ENCODE measurements at regions of chr15 and their contacts with region 1.

Region 1: GRCh38 chr15:70853821-70854666 is at the start of gene LARP6:
- DNase-seq: no peak
- ATAC-seq: peak; percentile 81
- H3K4me3 ChIP-seq: peak within 1 kb of the TSS; percentile 60 to 78 (median 64)
- H3K27ac ChIP-seq: no peak within 1 kb of the TSS
- H3K4me1 ChIP-seq: peaks cover 19% of the 10 kb centered on the region
- H3K27me3 ChIP-seq: peaks cover 0 to 17% of the 10 kb centered on the region in 2 experiments; a peak in 3 of 5 replicates
- CTCF ChIP-seq: no peak
- EP300 ChIP-seq: no peak
- POLR2A ChIP-seq: no peak
- RAD21 ChIP-seq: no peak
- total RNA-seq, gene LARP6: 2.9 and 3.0 TPM in 2 replicates

Region 2: GRCh38 chr15:70703096-70703878 is 150.8 kb before region 1 on chr15:
- CTCF ChIA-PET with region 1: no interaction called
- POLR2A ChIA-PET with region 1: no interaction called
- in situ Hi-C with region 1: no loop called
- intact Hi-C with region 1: no loop called
- DNase-seq: no peak
- ATAC-seq: no peak
- H3K4me3 ChIP-seq: no peak overlapping the region
- H3K27ac ChIP-seq: no peak overlapping the region
- H3K4me1 ChIP-seq: peaks cover 16% of the 10 kb centered on the region
- H3K27me3 ChIP-seq: no peaks in the 10 kb centered on the region
- CTCF ChIP-seq: no peak
- EP300 ChIP-seq: no peak
- POLR2A ChIP-seq: no peak
- RAD21 ChIP-seq: no peak

Region 3: GRCh38 chr15:70833897-70834765 is 19.9 kb before region 1 on chr15:
- CTCF ChIA-PET with region 1: no interaction called
- POLR2A ChIA-PET with region 1: interaction called, 69 read pairs
- in situ Hi-C with region 1: no loop called
- intact Hi-C with region 1: no loop called
- DNase-seq: peak; percentile 72
- ATAC-seq: peak; percentile 86
- H3K4me3 ChIP-seq: peak overlapping the region in 1 of 3 experiments; percentile 19; a peak in 2 of 6 replicates
- H3K27ac ChIP-seq: peak overlapping the region; percentile 46
- H3K4me1 ChIP-seq: peaks cover 38% of the 10 kb centered on the region
- H3K27me3 ChIP-seq: no peaks in the 10 kb centered on the region
- CTCF ChIP-seq: no peak
- EP300 ChIP-seq: peak in 1 of 2 experiments; percentile 54; a peak in 1 of 4 replicates
- POLR2A ChIP-seq: no peak
- RAD21 ChIP-seq: no peak